GM13977 (cell line): ENCODE measurements at regions of chr4 and their contacts with region 1.

Region 1: GRCh38 chr4:20422398-20422797 is 170.7 kb downstream of the SLIT2 start:
- DNase-seq: peak; percentile 22
- CTCF ChIP-seq: peak; percentile 50

Region 2: DNA sequence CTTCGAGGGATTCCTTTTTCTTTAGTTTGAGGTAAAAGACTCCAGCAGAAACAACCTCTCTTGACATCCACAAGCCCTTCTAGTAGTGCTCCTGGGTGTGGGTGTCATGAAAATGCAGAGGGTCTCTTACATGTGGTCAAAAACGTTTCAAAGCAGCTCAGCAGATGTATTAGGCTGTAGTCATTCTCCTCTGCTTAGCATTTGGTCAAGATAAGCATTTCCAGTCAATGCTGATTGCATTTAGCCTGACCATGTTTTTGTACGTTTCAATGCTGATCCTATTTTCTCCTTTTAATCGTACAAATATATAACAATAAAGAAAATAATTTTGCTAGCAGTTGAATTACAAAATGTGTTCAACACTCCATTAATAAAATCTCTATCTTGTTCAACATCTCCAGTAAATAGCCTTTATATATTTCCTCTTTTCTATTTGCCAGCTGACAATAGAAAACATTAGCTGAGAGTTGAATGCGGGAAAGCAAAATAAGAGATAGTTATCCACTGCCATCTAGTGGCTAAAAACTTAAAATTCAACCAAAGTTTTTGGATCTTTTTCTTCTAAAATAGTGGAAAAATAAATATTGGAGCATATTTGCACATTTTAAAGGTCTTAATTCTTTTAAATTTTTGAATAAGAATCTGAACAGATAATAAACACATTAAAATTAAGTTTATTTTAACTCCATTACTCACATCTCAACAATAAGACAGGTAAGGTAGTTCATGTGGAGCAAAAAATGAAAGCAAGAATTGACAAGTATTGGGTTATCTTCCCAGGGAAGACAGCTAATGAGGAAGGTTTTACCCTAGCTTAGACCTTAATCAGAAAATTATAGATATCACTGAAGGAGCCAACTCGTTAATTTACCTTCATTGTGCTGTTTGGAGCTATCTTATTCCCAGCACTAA is 262.7 kb after region 1 on chr4:
- in situ Hi-C with region 1: loop called (anchors 25 kb)
- DNase-seq: peak; percentile 24
- CTCF ChIP-seq: peak; percentile 47

Region 3: GRCh38 chr4:21032089-21032645 is 609.8 kb after region 1 on chr4:
- in situ Hi-C with region 1: no loop called
- DNase-seq: no peak
- CTCF ChIP-seq: no peak